Sigmoid colon (tissue), 7 donors: ENCODE measurements at regions of chr15 and their contacts with region 1.

Region 1: GRCh38 chr15:66356345-66357236 is at the start of gene TIPIN:
- DNase-seq: peak; percentile 98
- H3K4me3 ChIP-seq: peak within 1 kb of the TSS; percentile 51 to 85 (median 72)
- H3K27ac ChIP-seq: peak within 1 kb of the TSS; percentile 80 to 88 (median 86)
- H3K4me1 ChIP-seq: peaks cover 0 to 11% (median 8%) of the 10 kb centered on the region in 4 donors
- H3K27me3 ChIP-seq: no peaks in the 10 kb centered on the region
- CTCF ChIP-seq: no peak
- EP300 ChIP-seq: no peak
- POLR2A ChIP-seq: no peak
- total RNA-seq, gene TIPIN: 1.9 to 10.3 (median 6.1) TPM

Region 2: DNA sequence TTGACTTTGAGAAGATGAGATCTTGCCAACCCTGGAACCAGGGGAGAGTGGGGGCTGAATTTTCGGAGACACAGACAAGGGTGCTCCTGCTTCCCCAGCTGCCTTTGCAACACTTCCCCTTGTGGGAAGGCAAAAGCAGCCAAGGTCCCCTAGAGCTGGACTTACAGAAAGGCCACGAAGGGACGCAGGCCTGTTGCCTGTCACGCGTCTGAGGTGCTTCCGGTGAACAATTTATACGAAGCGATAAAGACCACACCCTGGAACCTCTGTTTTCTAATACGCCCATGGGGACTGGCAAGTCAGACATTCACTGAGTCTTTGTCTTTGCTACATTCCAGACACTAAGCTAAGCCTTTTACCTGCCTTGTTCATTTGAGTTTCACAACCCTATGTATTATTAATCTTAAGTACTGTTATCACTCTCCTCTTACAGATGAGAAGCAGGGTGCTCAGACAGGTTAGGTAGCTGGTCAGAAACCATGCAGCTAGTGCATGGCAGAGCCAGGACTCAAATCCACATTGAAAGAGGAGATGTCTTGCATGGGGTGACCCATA is 116.3 kb before region 1 on chr15:
- intact Hi-C with region 1: no loop called
- DNase-seq: no peak
- H3K4me3 ChIP-seq: no peak overlapping the region
- H3K27ac ChIP-seq: no peak overlapping the region
- H3K4me1 ChIP-seq: no peaks in the 10 kb centered on the region
- H3K27me3 ChIP-seq: peaks cover 0 to 31% (median 0%) of the 10 kb centered on the region in 3 donors
- CTCF ChIP-seq: no peak
- EP300 ChIP-seq: no peak
- POLR2A ChIP-seq: no peak

Region 3: DNA sequence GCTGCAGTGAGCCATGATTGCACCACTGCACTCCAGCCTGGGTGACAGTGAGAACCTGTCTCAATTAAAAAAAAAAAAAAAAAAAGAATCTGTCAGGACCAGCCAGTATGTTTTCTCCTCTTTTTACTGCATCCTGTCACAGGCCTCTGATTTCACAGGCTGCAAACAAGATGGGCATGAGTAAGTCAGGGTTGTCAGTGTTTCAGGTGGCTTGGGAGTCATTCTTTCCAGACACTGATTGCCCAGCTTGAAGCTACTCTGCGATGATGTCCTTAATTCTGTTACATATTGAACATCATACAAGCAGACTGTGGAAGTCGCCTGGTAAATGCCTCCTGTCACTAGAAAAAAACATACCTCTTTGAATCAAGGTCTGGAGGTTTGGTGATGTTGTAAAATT is 44.4 kb before region 1 on chr15:
- intact Hi-C with region 1: no loop called
- DNase-seq: no peak
- H3K4me3 ChIP-seq: no peak overlapping the region
- H3K27ac ChIP-seq: no peak overlapping the region
- H3K4me1 ChIP-seq: no peaks in the 10 kb centered on the region
- H3K27me3 ChIP-seq: no peaks in the 10 kb centered on the region
- CTCF ChIP-seq: no peak
- EP300 ChIP-seq: no peak
- POLR2A ChIP-seq: no peak

Region 4: DNA sequence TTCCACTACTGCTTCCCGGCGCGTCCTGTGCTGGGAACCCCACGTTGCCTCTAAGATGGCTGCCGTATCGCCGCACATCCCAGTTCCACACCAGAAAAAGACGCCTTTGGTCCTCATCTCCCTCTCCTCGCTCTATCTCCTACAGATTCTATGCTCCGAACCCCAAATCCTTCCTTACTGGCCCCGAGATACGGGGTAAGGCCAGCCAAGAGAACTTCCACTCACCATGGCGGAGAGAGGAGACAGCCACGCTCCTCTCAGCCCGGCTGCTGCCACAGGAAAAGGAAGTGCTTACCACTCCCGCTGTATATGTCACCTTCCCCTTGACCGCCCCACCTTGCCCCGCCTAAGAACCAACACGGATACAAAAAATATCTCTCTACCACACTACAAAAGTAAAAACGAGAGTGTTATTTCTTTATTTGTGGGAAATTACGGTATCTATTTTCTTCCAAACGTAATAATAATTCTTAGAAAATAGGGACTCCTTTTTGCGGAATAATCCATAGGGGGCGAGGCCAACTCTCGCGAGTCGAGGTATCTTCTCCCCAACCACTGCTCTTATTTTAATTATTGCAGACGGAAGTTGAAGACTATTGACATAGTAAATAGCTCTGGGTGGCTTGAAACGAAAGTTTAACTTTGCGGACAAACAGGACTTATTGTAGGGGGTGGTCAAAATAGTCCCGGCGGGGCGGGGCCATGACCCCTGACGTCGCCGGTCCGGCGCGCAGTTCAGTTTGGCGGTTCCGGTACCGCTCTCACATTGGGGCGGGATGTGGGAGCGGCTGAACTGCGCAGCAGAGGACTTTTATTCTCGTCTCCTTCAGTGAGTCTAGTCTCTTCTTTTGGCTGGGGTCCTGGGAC is 148.2 kb after region 1 on chr15 and contains the starts of genes RPL4 and ZWILCH:
- intact Hi-C with region 1: loop called (anchors 2 kb)
- DNase-seq: peak; percentile 90
- H3K4me3 ChIP-seq: peak within 1 kb of the TSS; percentile 65 to 87 (median 78)
- H3K27ac ChIP-seq: peak within 1 kb of the TSS; percentile 88 to 90 (median 89)
- H3K4me1 ChIP-seq: peaks cover 0 to 30% (median 22%) of the 10 kb centered on the region in 4 donors
- H3K27me3 ChIP-seq: no peaks in the 10 kb centered on the region
- CTCF ChIP-seq: no peak
- EP300 ChIP-seq: no peak
- POLR2A ChIP-seq: peak; percentile 98 to 99
- total RNA-seq, gene RPL4: 2,778 to 9,223 (median 4,574) TPM
- total RNA-seq, gene ZWILCH: 3.1 to 8.2 (median 3.6) TPM